Prostate gland (tissue), 2 donors: ENCODE measurements at regions of chr17 and their contacts with region 1.

Region 1: GRCh38 chr17:60959696-60960095 is 282.0 kb downstream of the BCAS3 start:
- DNase-seq: no peak
- H3K4me3 ChIP-seq: no peak overlapping the region
- H3K27ac ChIP-seq: no peak overlapping the region
- H3K4me1 ChIP-seq: no peaks in the 10 kb centered on the region
- H3K27me3 ChIP-seq: no peaks in the 10 kb centered on the region
- CTCF ChIP-seq: no peak
- POLR2A ChIP-seq: no peak

Region 2: GRCh38 chr17:61002316-61002736 is 42.6 kb after region 1 on chr17:
- intact Hi-C with region 1: no loop called
- DNase-seq: no peak
- H3K4me3 ChIP-seq: no peak overlapping the region
- H3K27ac ChIP-seq: no peak overlapping the region
- H3K4me1 ChIP-seq: no peaks in the 10 kb centered on the region
- H3K27me3 ChIP-seq: no peaks in the 10 kb centered on the region
- CTCF ChIP-seq: peak; percentile 14 to 66 (median 57)
- POLR2A ChIP-seq: no peak

Region 3: DNA sequence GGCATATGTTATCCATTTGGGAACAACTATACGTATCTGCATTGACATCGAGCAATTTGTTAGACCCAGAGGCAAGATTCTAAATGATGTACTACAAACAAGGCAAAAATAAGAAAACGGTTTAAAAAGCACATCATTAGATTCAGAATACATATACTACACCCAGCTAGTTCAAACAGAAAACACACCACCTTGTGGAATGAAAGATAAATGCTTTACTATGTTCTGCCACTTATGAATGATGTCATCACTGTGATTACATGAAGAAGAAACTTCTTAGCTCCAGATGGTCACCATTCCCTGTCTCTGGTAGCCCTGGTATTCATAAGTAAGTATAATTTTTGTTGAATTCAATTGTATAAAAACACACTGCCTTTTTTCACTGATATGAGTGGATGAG is 623.5 kb after region 1 on chr17:
- intact Hi-C with region 1: loop called (anchors 10 kb)
- DNase-seq: no peak
- H3K4me3 ChIP-seq: no peak overlapping the region
- H3K27ac ChIP-seq: no peak overlapping the region
- H3K4me1 ChIP-seq: no peaks in the 10 kb centered on the region
- H3K27me3 ChIP-seq: no peaks in the 10 kb centered on the region
- CTCF ChIP-seq: peak in 3 of 4 experiments; percentile 14 to 41 (median 22)
- POLR2A ChIP-seq: no peak